ENCODE measurements at regions of chr16 and their contacts with region 1.

Region 1: DNA sequence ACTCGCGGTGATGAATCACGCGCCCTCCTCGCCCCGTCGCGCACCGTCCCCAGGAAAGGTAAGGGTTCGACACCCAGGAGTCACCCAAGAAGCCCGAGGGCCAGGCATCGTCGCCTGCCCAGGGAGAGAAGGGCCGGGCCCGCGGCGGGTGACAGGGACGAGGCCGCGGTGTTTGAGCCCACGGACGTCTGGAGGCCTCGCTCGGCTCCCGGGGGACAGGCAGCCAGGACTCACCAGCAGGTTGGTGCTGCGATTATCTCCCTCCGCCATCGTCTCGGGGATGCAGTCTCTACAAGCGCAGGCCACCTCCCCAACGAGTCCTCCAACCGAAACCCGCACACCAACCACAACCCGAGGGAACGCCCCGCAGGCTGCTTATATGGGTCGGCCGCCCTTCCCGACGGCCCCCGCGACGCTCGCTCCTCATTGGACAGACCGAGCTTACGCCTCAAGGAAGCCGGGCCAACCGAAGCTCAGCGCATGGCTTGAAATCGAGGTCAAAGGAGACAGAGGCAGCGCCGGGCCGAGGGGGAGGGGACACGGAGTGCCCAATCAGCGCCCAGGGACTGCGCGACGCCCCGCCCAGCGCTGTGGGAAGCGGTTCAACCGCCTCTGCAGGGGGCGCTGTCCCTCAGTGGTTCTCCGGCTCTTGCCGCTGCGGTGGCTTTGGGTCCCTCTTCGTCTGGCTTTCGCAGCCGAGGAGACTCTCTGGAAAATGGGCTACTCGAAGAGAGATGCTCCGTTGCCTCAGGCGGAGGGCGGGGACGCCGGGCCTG is at the start of gene ARL6IP1:
- DNase-seq: peak; percentile 100
- H3K4me3 ChIP-seq: peak within 1 kb of the TSS; percentile 31 to 84 (median 69)
- H3K27ac ChIP-seq: peak within 1 kb of the TSS; percentile 84 to 87 (median 85)
- H3K4me1 ChIP-seq: peaks cover 36 to 40% of the 10 kb centered on the region in 2 donors
- H3K27me3 ChIP-seq: no peaks in the 10 kb centered on the region
- CTCF ChIP-seq: peak; percentile 66 to 98 (median 88)
- POLR2A ChIP-seq: peak; percentile 98 to 100
- total RNA-seq, gene ARL6IP1: 178 to 278 (median 227) TPM

Region 2: DNA sequence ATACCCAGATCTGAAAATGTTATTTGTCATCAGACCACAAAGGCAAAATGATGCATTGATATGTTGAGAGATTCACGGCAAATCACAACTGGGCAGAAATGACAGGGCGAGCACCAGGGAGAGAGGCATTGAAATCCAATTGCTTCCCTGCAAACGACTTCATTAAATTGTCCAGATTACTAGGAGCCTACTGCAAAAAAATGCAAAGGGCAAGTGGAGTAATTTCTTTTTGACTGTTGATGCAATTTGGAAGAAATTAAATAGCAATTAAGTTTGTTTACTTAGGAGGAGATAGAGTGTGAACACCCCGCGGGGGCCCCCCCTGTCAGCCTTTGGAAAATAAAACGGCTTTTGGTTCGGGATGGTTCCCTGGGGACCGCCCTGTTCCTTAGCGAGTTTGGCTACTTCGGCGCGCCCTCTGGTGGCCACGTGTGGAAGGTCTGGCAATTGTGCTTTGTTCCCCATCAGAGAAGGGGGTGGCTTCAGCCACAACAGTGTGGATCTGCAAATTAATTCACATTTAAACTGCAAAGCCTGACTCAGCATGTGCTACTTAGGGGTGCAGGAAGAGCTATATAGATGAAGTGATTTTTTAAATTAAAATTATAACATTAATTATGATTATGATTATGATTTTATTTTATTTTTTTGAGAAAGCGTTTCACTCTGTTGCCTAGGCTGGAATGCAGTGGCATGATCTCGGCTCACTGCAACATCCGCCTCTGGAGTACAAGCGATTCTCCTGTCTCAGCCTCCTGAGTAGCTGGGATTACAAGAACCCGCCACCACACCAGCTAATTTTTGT is 167.9 kb after region 1 on chr16:
- intact Hi-C with region 1: loop called (anchors 5 kb)
- DNase-seq: peak; percentile 82 to 89
- H3K4me3 ChIP-seq: no peak overlapping the region
- H3K27ac ChIP-seq: no peak overlapping the region
- H3K4me1 ChIP-seq: no peaks in the 10 kb centered on the region
- H3K27me3 ChIP-seq: no peaks in the 10 kb centered on the region
- CTCF ChIP-seq: peak; percentile 80 to 94 (median 84)
- POLR2A ChIP-seq: no peak